ENCODE measurements at regions of chr3 and their contacts with region 1.

Region 1: GRCh38 chr3:5401002-5401401 is 213.5 kb downstream of the EDEM1 start:
- DNase-seq: no peak
- ATAC-seq: no peak
- H3K4me3 ChIP-seq: no peak overlapping the region
- H3K4me3 Mint-ChIP-seq: no peak overlapping the region
- H3K27ac ChIP-seq: no peak overlapping the region
- H3K27ac Mint-ChIP-seq: no peak overlapping the region
- H3K4me1 ChIP-seq: no peaks in the 10 kb centered on the region
- H3K4me1 Mint-ChIP-seq: no peaks in the 10 kb centered on the region
- H3K27me3 ChIP-seq: peaks cover 0 to 2% of the 10 kb centered on the region in 2 experiments
- H3K27me3 Mint-ChIP-seq: peaks cover 3 to 20% of the 10 kb centered on the region in 2 donors

Region 2: GRCh38 chr3:5026331-5027218 is 374.4 kb before region 1 on chr3:
- CTCF ChIA-PET with region 1: no interaction called
- POLR2A ChIA-PET with region 1: no interaction called
- DNase-seq: peak in 34 of 35 experiments; percentile 22 to 79 (median 47)
- ATAC-seq: peak; percentile 76 to 83 (median 80)
- H3K4me3 ChIP-seq: peak overlapping the region; percentile 62
- H3K4me3 Mint-ChIP-seq: peak overlapping the region; percentile 76 to 83 (median 80)
- H3K27ac ChIP-seq: peak overlapping the region; percentile 69
- H3K27ac Mint-ChIP-seq: peak overlapping the region; percentile 64 to 86
- H3K4me1 ChIP-seq: peaks cover 2 to 19% of the 10 kb centered on the region in 2 experiments
- H3K4me1 Mint-ChIP-seq: peaks cover 5 to 26% (median 15%) of the 10 kb centered on the region in 3 donors
- H3K27me3 ChIP-seq: no peaks in the 10 kb centered on the region
- H3K27me3 Mint-ChIP-seq: no peaks in the 10 kb centered on the region

Region 3: DNA sequence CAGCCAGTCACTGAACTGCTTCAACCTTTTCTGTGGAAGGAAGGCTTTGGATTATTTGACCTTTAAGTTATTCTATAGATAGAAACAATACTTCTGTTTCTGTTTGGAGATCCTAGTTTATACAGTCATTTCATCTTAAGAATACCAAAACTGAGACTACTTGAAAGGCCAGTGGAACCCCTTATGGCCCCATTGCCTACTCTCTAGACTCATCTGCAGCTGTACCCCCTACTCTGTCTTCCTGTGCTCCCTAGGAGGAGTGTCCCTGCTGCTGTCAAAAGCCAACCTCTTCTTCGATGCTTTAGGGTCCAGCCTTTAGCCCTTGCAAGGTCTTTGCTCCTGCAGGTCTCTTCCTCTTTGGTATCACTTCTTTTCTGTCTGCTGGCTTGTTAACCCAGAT is 43.9 kb before region 1 on chr3:
- CTCF ChIA-PET with region 1: interaction called in 1 of 2 experiments, 5 read pairs
- POLR2A ChIA-PET with region 1: interaction called in 1 of 2 experiments, 10 read pairs
- DNase-seq: no peak
- ATAC-seq: no peak
- H3K4me3 ChIP-seq: no peak overlapping the region
- H3K4me3 Mint-ChIP-seq: no peak overlapping the region
- H3K27ac ChIP-seq: no peak overlapping the region
- H3K27ac Mint-ChIP-seq: no peak overlapping the region
- H3K4me1 ChIP-seq: no peaks in the 10 kb centered on the region
- H3K4me1 Mint-ChIP-seq: no peaks in the 10 kb centered on the region
- H3K27me3 ChIP-seq: no peaks in the 10 kb centered on the region
- H3K27me3 Mint-ChIP-seq: peaks cover 2 to 11% of the 10 kb centered on the region in 2 donors

Region 4: DNA sequence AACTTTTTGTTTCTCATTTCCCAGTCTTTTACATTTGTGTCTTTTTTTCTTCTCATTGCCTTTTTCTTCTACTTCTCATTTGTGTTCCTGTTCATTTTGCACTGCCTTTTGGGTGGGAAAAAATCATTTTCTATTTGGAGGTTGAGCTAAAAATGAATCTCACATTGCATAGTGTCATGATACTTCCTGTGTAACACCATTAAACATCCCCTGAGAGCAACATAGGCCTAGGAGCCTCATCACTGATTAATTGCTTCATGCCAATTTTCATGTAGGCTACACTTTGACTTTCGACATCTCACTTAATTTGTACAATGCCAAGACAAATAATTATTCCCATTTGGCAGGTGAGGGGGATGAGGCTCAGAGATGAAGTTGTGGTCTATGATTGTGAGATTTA is 65.7 kb after region 1 on chr3:
- CTCF ChIA-PET with region 1: interaction called in 1 of 2 experiments, 13 read pairs
- POLR2A ChIA-PET with region 1: no interaction called
- DNase-seq: no peak
- ATAC-seq: no peak
- H3K4me3 ChIP-seq: no peak overlapping the region
- H3K4me3 Mint-ChIP-seq: no peak overlapping the region
- H3K27ac ChIP-seq: no peak overlapping the region
- H3K27ac Mint-ChIP-seq: no peak overlapping the region
- H3K4me1 ChIP-seq: no peaks in the 10 kb centered on the region
- H3K4me1 Mint-ChIP-seq: no peaks in the 10 kb centered on the region
- H3K27me3 ChIP-seq: no peaks in the 10 kb centered on the region
- H3K27me3 Mint-ChIP-seq: peaks cover 7 to 12% of the 10 kb centered on the region in 2 donors